PC-3 (cell line): ENCODE measurements at regions of chr20 and their contacts with region 1.

Region 1: GRCh38 chr20:43355610-43356009 is 102.1 kb upstream of the SRSF6 start:
- DNase-seq: no peak
- ATAC-seq: no peak
- H3K4me3 ChIP-seq: no peak overlapping the region
- H3K27ac ChIP-seq: no peak overlapping the region
- H3K4me1 ChIP-seq: no peaks in the 10 kb centered on the region
- H3K27me3 ChIP-seq: peaks cover 80% of the 10 kb centered on the region
- CTCF ChIP-seq: no peak

Region 2: GRCh38 chr20:43839793-43840199 is 484.2 kb after region 1 on chr20:
- CTCF ChIA-PET with region 1: no interaction called
- POLR2A ChIA-PET with region 1: no interaction called
- intact Hi-C with region 1: no loop called
- DNase-seq: peak; percentile 51
- ATAC-seq: no peak
- H3K4me3 ChIP-seq: no peak overlapping the region
- H3K27ac ChIP-seq: no peak overlapping the region
- H3K4me1 ChIP-seq: peaks cover 38% of the 10 kb centered on the region
- H3K27me3 ChIP-seq: no peaks in the 10 kb centered on the region
- CTCF ChIP-seq: no peak

Region 3: DNA sequence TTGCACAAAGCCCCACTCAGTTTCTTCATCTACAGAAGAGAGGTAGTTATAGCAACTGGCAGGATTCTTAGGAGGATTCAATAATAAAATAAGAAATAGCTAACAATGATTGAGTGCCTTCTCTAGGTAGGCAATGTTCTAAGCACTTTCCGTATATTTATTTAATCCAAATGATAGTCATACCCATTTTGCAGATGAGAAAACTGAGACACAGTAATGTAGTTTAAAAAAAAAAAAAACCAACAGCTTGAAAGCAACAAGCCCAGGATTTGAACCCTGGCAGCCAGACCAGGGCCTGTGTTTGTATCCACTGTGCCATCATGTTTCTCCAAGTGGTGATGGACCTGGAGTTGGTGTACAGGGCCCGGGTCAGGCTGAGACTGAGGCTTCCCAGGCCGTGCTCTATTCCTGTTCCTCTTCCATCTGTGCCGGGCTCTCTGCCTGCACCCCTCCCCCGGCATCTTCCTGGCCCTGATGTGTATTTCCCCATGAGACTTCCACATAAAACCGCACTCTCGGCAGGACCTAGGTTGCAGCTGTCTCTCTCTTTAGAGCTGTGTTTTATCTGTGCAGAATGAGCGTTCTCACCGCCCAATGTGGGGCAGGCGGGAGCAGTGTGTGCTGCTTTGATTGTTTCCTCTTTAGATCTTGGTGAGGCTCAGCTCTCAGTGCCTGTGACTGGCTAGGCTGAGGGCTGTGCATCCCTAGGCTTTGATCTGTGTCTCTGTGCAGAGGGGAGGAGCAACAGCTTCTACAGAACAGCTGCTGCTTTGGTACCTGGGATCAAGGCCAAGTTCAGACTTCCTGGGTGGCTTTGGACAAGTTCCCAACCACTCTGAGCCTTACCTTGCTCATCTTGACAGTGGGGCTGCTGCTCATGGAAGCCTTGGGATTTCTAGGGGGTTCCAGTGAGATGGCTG is 608.5 kb after region 1 on chr20:
- CTCF ChIA-PET with region 1: no interaction called
- POLR2A ChIA-PET with region 1: no interaction called
- intact Hi-C with region 1: no loop called
- DNase-seq: peak; percentile 56
- ATAC-seq: peak; percentile 31; the same call in 1 of the 2 replicates
- H3K4me3 ChIP-seq: no peak overlapping the region
- H3K27ac ChIP-seq: no peak overlapping the region
- H3K4me1 ChIP-seq: peaks cover 8% of the 10 kb centered on the region
- H3K27me3 ChIP-seq: no peaks in the 10 kb centered on the region
- CTCF ChIP-seq: no peak

Region 4: DNA sequence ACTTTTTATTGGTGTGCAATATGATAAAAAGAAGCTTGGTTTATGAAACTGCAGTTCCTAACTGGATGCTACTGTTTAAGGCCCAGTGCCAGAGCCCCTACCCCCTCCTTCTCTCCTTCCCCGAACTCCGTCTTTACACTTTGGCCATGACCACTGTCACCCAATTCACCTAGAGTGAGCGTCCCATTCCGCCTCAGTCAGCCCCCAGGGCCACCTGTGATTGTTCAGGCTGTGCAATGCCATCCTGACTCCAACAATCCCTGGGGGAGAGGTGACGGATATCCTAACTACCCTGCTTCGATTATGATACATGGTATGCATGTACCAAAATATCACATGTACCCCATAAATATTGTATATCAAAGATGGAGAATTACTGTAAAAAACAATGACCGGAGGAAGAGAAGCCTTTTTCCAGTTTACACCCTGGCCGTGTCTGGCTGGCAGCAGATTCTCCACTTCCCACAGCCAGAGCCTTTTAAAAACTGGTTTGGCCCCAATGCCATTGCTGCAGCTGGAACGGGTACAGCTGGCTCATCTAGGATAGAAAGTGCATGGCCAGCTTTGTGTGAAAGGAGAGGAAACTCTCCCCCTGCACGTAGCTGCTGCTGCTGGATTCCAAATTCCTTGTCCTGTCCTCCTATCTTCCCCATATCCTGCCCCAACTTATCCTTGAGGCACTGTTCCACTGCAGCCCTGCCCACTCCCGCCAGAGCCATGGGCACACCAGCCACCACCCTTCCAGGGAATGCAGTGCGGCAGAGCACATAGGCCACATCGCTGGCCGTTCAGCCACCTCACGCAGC is 731.6 kb after region 1 on chr20:
- CTCF ChIA-PET with region 1: no interaction called
- POLR2A ChIA-PET with region 1: interaction called, 22 read pairs
- intact Hi-C with region 1: no loop called
- DNase-seq: no peak
- ATAC-seq: no peak
- H3K4me3 ChIP-seq: no peak overlapping the region
- H3K27ac ChIP-seq: no peak overlapping the region
- H3K4me1 ChIP-seq: peaks cover 22% of the 10 kb centered on the region
- H3K27me3 ChIP-seq: no peaks in the 10 kb centered on the region
- CTCF ChIP-seq: no peak

Region 5: DNA sequence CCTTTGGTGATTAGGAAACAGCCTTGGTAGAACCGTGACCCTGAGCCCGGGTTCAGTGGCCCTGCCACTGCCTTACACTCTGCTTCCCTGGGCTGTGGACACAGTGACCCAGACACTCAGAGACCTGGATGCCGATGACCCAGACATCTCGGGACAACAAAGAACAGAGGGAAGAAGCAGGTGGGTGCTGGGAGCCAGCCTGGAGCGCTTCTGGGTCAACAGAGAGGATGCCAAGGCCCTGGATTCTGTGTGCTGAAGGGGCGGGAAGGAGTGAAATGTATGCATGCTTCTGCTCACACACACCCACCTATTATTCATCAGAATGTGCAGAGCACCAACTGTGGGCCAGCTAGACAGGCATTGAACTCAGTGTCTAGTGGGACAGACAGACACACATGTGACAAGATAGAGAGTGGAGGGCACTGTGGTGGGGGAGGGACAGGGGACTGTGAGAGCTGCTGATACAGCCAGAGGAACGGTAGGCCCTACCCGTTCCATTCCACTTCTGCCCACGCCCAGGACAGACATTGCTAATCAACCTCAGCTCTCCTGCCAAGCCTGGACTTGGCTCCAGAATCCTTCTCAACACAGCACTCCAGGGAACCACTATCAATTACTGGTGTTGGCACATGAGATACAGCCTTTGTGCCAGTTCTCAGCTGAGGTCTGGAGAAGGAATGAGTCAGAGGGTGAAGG is 1410.2 kb after region 1 on chr20:
- CTCF ChIA-PET with region 1: no interaction called
- POLR2A ChIA-PET with region 1: no interaction called
- intact Hi-C with region 1: no loop called
- DNase-seq: peak; percentile 49
- ATAC-seq: peak; percentile 49
- H3K4me3 ChIP-seq: no peak overlapping the region
- H3K27ac ChIP-seq: no peak overlapping the region
- H3K4me1 ChIP-seq: no peaks in the 10 kb centered on the region; the same call in 1 of the 2 replicates
- H3K27me3 ChIP-seq: peaks cover 32% of the 10 kb centered on the region; the same call in 1 of the 2 replicates
- CTCF ChIP-seq: no peak